ENCODE measurements at regions of chr9 and their contacts with region 1.

Region 1: DNA sequence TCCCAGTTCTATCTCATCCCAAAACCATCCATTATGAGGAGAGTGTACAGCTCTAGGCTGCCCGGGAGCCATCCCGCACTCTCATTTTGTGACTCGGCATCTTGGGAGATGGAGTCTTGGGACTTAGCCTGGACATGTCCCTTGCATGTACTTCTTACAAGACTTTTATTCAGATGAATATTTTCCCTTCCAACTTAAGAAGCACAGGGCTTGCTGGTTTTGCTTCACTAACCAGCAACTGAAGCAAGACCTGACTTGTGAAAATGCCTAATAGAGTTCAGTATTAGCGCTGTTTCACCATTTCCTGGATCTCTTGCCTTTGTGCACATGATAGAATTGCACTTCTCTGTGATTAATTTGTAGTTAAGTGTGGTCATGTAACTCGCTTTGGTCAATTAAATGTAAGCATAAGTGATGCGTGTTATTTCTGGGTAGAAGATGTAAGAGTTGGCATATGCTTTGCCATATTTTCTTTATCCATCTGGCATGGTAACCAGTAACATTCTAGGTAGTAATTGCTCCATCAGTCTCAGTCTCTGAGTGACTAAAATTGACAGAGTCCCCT is 55.8 kb downstream of the PDCD1LG2 start:
- DNase-seq: no peak
- ATAC-seq: peak in 1 of 4 donors; percentile 15
- H3K4me3 ChIP-seq: no peak overlapping the region
- H3K27ac ChIP-seq: no peak overlapping the region
- H3K4me1 ChIP-seq: peaks cover 17% of the 10 kb centered on the region
- H3K27me3 ChIP-seq: no peaks in the 10 kb centered on the region
- CTCF ChIP-seq: no peak

Region 2: DNA sequence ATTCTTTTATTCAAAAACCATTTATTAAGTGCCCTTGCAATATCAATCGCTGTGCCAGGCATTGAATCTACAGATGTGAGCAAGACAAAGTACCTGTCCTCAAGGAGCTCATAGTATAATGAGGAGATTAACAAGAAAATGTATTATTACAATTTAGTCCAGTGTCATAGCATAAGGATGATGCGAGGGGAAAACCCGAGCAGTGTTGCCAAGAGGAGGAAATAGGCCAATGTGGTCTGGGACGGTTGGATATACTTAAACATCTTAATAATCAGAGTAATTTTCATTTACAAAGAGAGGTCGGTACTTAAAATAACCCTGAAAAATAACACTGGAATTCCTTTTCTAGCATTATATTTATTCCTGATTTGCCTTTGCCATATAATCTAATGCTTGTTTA is 97.3 kb before region 1 on chr9:
- intact Hi-C with region 1: loop called in 1 of 2 experiments (anchors 10 kb)
- DNase-seq: no peak
- ATAC-seq: no peak
- H3K4me3 ChIP-seq: no peak overlapping the region
- H3K27ac ChIP-seq: no peak overlapping the region
- H3K4me1 ChIP-seq: no peaks in the 10 kb centered on the region
- H3K27me3 ChIP-seq: no peaks in the 10 kb centered on the region
- CTCF ChIP-seq: no peak

Measured in psoas muscle (tissue), 8 donors.